H1 (cell line): ENCODE measurements at regions of chr2 and their contacts with region 1.

Region 1: GRCh38 chr2:70616168-70616694 is 62.6 kb upstream of the TGFA start:
- DNase-seq: no peak
- H3K4me3 ChIP-seq: no peak overlapping the region
- H3K27ac ChIP-seq: no peak overlapping the region
- H3K4me1 ChIP-seq: peaks cover 1 to 6% (median 2%) of the 10 kb centered on the region in 4 experiments; a peak in 5 of 7 replicates
- H3K27me3 ChIP-seq: no peaks in the 10 kb centered on the region; a peak in 1 of 7 replicates
- CTCF ChIP-seq: no peak
- EP300 ChIP-seq: no peak
- POLR2A ChIP-seq: no peak
- RAD21 ChIP-seq: no peak

Region 2: DNA sequence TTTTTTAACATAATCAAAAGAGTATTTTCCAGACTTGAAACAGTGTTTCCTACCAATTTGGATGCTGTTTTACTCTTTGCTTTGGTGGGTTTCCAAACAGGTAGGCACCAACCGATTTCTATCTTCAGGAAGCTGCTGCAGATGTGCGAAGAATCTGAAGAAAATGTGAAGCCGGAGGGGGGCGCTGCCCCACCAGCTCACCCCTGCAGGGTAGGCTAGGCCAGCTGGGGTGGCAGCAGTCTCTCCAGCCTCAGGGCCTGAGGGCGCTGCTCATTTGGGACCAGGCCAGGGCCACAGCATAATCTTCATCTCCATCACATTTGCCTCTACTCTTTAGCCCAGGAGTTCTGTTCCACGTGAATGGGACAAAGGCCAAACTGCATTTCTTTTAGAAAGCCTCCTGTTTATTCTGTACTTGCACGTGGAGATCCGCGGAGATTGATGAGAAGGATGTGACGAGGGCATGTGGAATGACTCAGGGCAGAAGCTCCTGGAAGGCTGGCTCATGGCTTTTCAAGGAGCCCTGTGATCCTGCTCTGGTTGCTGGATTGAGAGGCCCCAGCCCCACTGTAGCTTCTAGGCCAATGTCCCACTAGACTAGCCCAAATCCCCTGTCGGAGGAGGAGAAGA is 230.2 kb before region 1 on chr2:
- CTCF ChIA-PET with region 1: interaction called, 15 read pairs
- POLR2A ChIA-PET with region 1: no interaction called
- DNase-seq: peak; percentile 31 to 76
- H3K4me3 ChIP-seq: no peak overlapping the region
- H3K27ac ChIP-seq: no peak overlapping the region
- H3K4me1 ChIP-seq: no peaks in the 10 kb centered on the region
- H3K27me3 ChIP-seq: no peaks in the 10 kb centered on the region; a peak in 3 of 7 replicates
- CTCF ChIP-seq: peak; percentile 47 to 74 (median 48)
- EP300 ChIP-seq: no peak
- POLR2A ChIP-seq: no peak
- RAD21 ChIP-seq: peak; percentile 71 to 83

Region 3: GRCh38 chr2:70460333-70460732 is 155.9 kb before region 1 on chr2:
- CTCF ChIA-PET with region 1: interaction called, 16 read pairs
- POLR2A ChIA-PET with region 1: no interaction called
- DNase-seq: no peak
- H3K4me3 ChIP-seq: no peak overlapping the region
- H3K27ac ChIP-seq: no peak overlapping the region
- H3K4me1 ChIP-seq: peaks cover 0 to 10% (median 4%) of the 10 kb centered on the region in 4 experiments; a peak in 5 of 7 replicates
- H3K27me3 ChIP-seq: no peaks in the 10 kb centered on the region
- CTCF ChIP-seq: peak; percentile 66 to 84 (median 75)
- EP300 ChIP-seq: no peak
- POLR2A ChIP-seq: no peak
- RAD21 ChIP-seq: peak; percentile 50 to 70

Region 4: GRCh38 chr2:70553584-70554337 is 62.5 kb before region 1 on chr2 and contains the start of gene TGFA:
- CTCF ChIA-PET with region 1: interaction called, 33 read pairs
- POLR2A ChIA-PET with region 1: interaction called, 4 read pairs
- DNase-seq: peak; percentile 66 to 88
- H3K4me3 ChIP-seq: peak within 1 kb of the TSS; percentile 45 to 85 (median 66)
- H3K27ac ChIP-seq: no peak within 1 kb of the TSS
- H3K4me1 ChIP-seq: peaks cover 3 to 6% (median 4%) of the 10 kb centered on the region in 4 experiments; a peak in 5 of 7 replicates
- H3K27me3 ChIP-seq: peaks cover 6 to 45% (median 28%) of the 10 kb centered on the region in 4 experiments
- CTCF ChIP-seq: peak; percentile 83 to 89 (median 85)
- EP300 ChIP-seq: 0 out of 3 replicates have a peak, but pooled peaks of 1 of the 2 experiments have one; percentile 29
- POLR2A ChIP-seq: 0 out of 3 replicates have a peak, but pooled peaks of 1 of the 2 experiments have one; percentile 3
- RAD21 ChIP-seq: peak; percentile 66 to 79; a peak in 3 of 4 replicates
- total RNA-seq, gene TGFA: 2.8 and 3.7 TPM in 2 replicates

Region 5: GRCh38 chr2:70627211-70627902 is 11.1 kb after region 1 on chr2:
- CTCF ChIA-PET with region 1: interaction called, 27 read pairs
- POLR2A ChIA-PET with region 1: no interaction called
- DNase-seq: no peak
- H3K4me3 ChIP-seq: no peak overlapping the region
- H3K27ac ChIP-seq: no peak overlapping the region
- H3K4me1 ChIP-seq: peaks cover 4 to 11% (median 5%) of the 10 kb centered on the region in 4 experiments
- H3K27me3 ChIP-seq: no peaks in the 10 kb centered on the region
- CTCF ChIP-seq: no peak
- EP300 ChIP-seq: no peak
- POLR2A ChIP-seq: no peak
- RAD21 ChIP-seq: no peak

Region 6: DNA sequence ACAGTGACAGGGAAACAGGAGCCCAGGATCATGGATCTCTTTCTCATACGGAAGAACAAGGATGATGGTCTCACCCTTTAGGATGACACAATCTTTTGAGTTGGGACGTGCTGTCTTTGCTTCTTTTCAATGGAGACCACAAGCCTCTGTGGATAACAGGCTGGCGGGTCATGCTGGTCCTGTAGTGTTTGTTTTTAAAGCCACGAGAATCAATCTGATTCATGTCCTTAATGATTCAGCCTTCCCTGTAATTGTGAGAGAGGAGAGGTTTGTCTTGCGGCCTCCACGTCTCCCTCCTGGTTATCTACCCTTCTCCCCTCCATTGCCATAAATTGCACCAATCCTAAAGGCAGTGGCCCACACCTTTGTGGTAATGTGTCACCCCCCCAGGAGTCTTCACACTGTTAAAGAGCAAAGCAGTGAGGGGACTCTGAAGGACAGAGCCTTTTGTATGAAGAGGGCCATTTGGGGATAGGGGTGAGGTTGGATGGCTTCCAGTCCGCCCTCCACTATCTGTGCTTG is 25.1 kb after region 1 on chr2:
- CTCF ChIA-PET with region 1: interaction called, 51 read pairs
- POLR2A ChIA-PET with region 1: no interaction called
- DNase-seq: no peak
- H3K4me3 ChIP-seq: no peak overlapping the region
- H3K27ac ChIP-seq: no peak overlapping the region
- H3K4me1 ChIP-seq: no peaks in the 10 kb centered on the region
- H3K27me3 ChIP-seq: no peaks in the 10 kb centered on the region; a peak in 2 of 7 replicates
- CTCF ChIP-seq: no peak
- EP300 ChIP-seq: no peak
- POLR2A ChIP-seq: no peak
- RAD21 ChIP-seq: no peak

Region 7: GRCh38 chr2:70901227-70902066 is 285.2 kb after region 1 on chr2:
- CTCF ChIA-PET with region 1: no interaction called
- POLR2A ChIA-PET with region 1: no interaction called
- DNase-seq: peak in 1 of 2 experiments; percentile 83
- H3K4me3 ChIP-seq: peak overlapping the region; percentile 24 to 60 (median 40)
- H3K27ac ChIP-seq: no peak overlapping the region
- H3K4me1 ChIP-seq: peaks cover 0 to 34% (median 25%) of the 10 kb centered on the region in 4 experiments; a peak in 6 of 7 replicates
- H3K27me3 ChIP-seq: peaks cover 98 to 99% (median 99%) of the 10 kb centered on the region in 4 experiments
- CTCF ChIP-seq: no peak
- EP300 ChIP-seq: no peak
- POLR2A ChIP-seq: no peak
- RAD21 ChIP-seq: no peak